HEK293 (cell line): ENCODE measurements at regions of chr11 and their contacts with region 1.

Region 1: DNA sequence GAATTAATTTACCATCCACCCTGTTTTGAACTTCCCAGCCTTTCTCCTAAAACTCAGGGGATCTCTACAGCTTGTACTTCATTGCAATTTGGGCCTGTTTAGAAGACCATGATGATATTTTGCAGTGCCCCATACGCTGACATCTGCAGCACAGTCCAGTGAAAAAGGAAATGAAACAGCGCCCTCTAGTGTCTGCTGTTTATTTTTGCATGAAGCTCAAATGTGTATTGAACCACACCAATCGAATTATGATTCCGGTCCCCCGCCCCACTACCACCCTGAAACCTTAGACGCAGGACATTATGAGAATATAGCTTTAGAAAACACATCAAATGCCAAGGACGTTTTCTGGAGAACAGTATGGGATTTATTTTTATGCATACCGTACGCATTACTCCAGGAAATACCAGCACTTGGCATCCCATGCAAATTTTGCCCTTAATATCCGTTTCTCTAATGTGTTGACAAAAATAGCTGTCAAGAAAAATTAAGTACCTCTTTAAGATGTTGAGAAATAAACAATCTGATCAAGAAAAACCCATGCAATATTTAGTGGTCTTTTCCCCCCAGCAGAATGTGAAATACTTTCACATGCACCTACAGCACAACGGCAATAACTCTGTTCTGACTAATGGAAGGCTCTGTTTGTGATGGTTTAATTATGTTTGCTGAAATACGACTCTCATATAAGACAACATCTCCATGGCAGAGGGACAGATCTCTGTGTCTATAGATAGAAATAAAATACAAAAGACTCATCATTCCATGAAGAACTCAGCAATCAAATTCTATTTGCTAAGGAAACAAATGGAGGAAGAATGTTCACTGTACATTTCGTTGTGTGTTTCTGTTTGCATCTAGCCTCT is 93.9 kb downstream of the TECTA start:
- H3K4me3 ChIP-seq: peak overlapping the region; percentile 15
- H3K27ac ChIP-seq: no peak overlapping the region
- H3K4me1 ChIP-seq: no peaks in the 10 kb centered on the region
- CTCF ChIP-seq: peak; percentile 57

Region 2: DNA sequence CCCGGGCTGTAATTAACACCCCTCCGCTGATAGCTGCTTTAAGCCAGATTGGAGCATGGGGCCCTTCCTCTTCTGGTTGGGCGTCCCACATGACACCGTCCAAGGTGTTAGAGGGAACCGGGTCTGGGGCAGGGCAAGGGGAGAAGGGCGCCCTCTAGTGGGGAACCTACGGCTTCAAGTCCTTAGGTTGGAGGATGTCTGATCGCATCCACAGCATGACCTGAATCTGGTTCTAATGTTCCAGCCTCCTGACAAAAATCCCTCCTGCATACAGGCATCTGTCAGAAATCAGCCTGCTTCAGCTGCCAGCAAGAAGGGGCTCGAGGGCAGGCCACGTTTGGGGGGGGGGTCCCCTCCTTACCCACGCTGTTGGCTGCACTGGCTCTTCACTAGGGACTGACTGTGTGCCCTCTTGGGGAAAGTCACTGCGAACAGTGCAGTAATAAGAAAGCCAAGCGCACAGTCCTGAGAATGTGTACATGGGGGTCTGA is 265.3 kb before region 1 on chr11:
- CTCF ChIA-PET with region 1: interaction called, 12 read pairs
- POLR2A ChIA-PET with region 1: no interaction called
- H3K4me3 ChIP-seq: no peak overlapping the region
- H3K27ac ChIP-seq: no peak overlapping the region
- H3K4me1 ChIP-seq: no peaks in the 10 kb centered on the region
- CTCF ChIP-seq: peak; percentile 49; the same call in 1 of the 2 replicates

Region 3: DNA sequence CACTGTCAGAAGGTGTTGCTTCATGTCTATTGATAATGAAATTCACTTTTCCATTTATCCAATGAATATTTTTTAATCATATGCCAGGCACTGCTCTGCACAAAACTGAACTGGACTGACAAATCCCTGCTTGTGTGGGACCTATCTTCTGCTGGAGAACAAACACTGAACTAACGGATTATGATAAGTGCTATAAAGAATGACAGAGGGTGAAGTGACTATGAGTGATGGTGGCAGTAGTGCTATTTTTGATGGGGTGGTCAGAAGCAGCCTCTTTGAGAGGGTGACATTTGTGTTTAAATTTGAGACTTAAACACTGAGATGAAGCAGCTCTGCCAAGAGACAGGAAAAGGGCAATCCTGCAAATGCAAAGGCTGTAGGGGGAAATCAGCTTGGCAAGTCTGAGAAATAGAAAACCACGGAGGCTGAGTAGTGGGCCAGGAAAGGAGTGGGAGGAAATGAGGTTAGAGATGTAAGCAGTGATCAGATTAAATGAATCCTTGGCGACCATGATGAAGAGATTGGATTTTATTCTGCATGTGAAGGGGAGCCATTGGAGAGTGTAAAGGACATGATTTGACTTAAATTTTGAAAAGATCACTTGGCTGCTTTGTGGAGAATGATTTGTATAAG is 165.0 kb before region 1 on chr11:
- CTCF ChIA-PET with region 1: interaction called, 17 read pairs
- POLR2A ChIA-PET with region 1: no interaction called
- H3K4me3 ChIP-seq: no peak overlapping the region
- H3K27ac ChIP-seq: no peak overlapping the region
- H3K4me1 ChIP-seq: peaks cover 5% of the 10 kb centered on the region; the same call in 1 of the 2 replicates
- CTCF ChIP-seq: no peak

Region 4: GRCh38 chr11:121119440-121119839 is 75.5 kb before region 1 on chr11:
- CTCF ChIA-PET with region 1: interaction called, 22 read pairs
- POLR2A ChIA-PET with region 1: no interaction called
- H3K4me3 ChIP-seq: no peak overlapping the region
- H3K27ac ChIP-seq: no peak overlapping the region
- H3K4me1 ChIP-seq: no peaks in the 10 kb centered on the region
- CTCF ChIP-seq: no peak

Region 5: DNA sequence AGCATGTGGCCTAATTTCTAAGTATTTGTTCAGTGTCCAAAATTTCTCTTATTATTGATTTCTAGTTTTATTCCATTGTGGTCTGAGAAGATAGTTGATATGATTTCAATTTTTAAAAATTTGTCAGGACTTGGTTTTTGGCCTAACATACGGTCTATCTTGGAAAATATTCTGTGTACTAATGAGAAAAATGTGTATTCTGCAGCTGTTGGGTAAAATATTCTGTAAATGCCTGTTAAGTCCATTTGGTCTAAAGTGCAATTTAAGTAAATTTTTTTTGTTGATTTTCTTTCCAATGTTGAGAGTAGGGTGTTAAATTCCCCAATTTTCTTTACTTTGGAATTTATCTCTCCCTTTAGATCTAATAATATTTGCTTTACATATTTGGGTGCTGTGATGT is 15.7 kb before region 1 on chr11:
- CTCF ChIA-PET with region 1: interaction called, 13 read pairs
- POLR2A ChIA-PET with region 1: no interaction called
- H3K4me3 ChIP-seq: no peak overlapping the region
- H3K27ac ChIP-seq: no peak overlapping the region
- H3K4me1 ChIP-seq: no peaks in the 10 kb centered on the region
- CTCF ChIP-seq: no peak

Region 6: GRCh38 chr11:121426476-121427399 is 231.8 kb after region 1 on chr11:
- CTCF ChIA-PET with region 1: no interaction called
- POLR2A ChIA-PET with region 1: no interaction called
- H3K4me3 ChIP-seq: peak overlapping the region; percentile 10; the same call in 1 of the 2 replicates
- H3K27ac ChIP-seq: no peak overlapping the region
- H3K4me1 ChIP-seq: peaks cover 3% of the 10 kb centered on the region; the same call in 1 of the 2 replicates
- CTCF ChIP-seq: no peak